PC-9 (cell line): ENCODE measurements at regions of chr10 and their contacts with region 1.

Region 1: DNA sequence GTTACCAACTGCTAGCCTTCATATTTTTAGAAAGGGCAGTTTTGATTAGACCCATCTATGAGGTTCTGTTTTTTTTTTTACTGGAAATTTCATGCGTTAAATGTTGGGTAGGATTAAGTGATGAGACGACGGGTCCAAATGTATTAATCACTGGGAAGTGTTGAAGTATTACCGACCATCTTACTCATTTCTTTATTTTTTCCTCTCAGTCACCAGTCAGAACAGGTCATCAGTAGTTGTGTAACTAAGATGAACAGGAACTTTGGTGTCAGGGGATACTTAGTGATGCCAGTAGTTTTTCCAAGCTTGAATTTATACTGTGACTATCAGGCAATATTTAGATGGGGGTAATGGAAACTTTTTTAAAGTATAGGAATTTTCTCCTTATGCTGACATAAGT is 14.2 kb downstream of the TFAM start:
- DNase-seq: no peak
- H3K4me3 ChIP-seq: no peak overlapping the region
- H3K27ac ChIP-seq: no peak overlapping the region
- H3K4me1 ChIP-seq: no peaks in the 10 kb centered on the region
- H3K27me3 ChIP-seq: no peaks in the 10 kb centered on the region
- CTCF ChIP-seq: no peak

Region 2: DNA sequence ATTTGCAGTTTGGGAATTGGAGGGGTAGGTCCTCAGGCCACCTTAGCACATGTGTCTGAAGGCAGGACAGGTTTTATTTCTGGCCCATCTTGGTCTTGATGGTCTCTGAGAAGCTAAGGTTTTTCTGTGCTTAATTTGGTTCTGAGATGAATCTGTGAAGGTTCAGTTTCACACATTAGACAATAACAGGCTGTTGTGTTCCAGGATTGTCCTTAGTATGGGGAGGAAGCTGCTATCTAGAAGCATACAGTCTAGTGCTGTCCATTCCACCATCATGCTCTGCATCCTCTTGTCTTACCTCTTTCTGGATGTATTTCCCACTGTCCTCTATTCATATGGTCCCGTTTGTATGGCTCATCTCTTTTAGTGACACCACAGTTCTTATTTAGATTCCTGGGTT is 57.5 kb before region 1 on chr10:
- CTCF ChIA-PET with region 1: interaction called, 10 read pairs
- POLR2A ChIA-PET with region 1: no interaction called
- intact Hi-C with region 1: no loop called
- DNase-seq: no peak
- H3K4me3 ChIP-seq: no peak overlapping the region
- H3K27ac ChIP-seq: no peak overlapping the region
- H3K4me1 ChIP-seq: peaks cover 7% of the 10 kb centered on the region
- H3K27me3 ChIP-seq: no peaks in the 10 kb centered on the region
- CTCF ChIP-seq: no peak

Region 3: GRCh38 chr10:58608351-58608750 is 208.9 kb after region 1 on chr10:
- CTCF ChIA-PET with region 1: no interaction called
- POLR2A ChIA-PET with region 1: interaction called, 20 read pairs
- intact Hi-C with region 1: no loop called
- DNase-seq: no peak
- H3K4me3 ChIP-seq: no peak overlapping the region
- H3K27ac ChIP-seq: no peak overlapping the region
- H3K4me1 ChIP-seq: no peaks in the 10 kb centered on the region
- H3K27me3 ChIP-seq: no peaks in the 10 kb centered on the region
- CTCF ChIP-seq: no peak